ENCODE measurements at regions of chr1 and their contacts with region 1.

Region 1: DNA sequence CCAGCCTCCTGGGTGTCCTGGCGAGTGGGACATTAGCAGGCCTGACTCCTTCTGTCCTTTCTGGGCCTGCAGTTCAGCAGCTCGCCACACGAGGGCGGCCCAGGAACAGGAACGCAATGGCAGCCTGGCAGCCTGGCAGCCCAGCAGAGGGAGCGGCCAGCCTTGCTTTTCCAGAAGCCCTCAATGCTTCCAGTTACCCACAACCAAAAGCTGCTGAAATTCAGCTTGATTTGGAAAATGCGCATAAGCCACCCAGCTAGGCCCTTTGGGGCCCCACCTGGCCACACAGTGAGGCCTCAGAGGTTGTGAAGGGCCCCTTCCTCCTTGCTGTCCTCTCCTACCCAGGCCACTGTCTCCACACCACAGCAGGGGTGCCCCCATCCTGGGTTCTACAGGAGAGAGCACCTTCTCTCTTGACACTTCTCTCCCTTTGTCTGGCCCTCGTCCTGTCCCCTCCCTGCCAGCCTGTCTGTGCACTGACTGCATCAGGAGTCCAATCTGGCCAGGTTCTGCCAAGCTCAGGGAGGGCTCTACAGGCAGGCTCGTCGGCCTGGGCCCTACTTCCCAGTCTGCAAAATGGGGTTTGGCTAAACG is 103.4 kb upstream of the VAMP3 start:
- ATAC-seq: peak; percentile 26 to 92 (median 36)
- H3K4me3 ChIP-seq: no peak overlapping the region
- H3K27ac ChIP-seq: peak overlapping the region; percentile 86 to 98
- H3K4me1 ChIP-seq: peaks cover 36 to 41% of the 10 kb centered on the region in 2 donors

Region 2: GRCh38 chr1:7356079-7356478 is 311.6 kb before region 1 on chr1:
- in situ Hi-C with region 1: no loop called
- ATAC-seq: no peak
- H3K4me3 ChIP-seq: no peak overlapping the region
- H3K27ac ChIP-seq: no peak overlapping the region
- H3K4me1 ChIP-seq: peaks cover 0 to 26% of the 10 kb centered on the region in 2 donors

Region 3: DNA sequence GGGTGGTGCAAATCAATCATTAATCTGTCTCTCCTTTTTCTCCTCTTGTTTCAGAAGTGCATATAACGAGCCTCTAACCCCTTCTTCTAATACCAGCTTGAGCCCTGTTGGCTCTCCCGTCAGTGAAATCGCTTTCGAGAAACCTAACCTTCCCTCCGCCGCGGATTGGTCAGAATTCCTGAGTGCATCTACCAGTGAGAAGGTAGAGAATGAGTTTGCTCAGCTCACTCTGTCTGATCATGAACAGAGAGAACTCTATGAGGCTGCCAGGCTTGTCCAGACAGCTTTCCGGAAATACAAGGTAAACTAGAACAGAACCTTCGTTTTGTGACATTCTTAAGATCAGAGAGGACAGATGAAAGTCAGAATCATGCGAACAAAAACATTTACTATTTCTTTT is 78.1 kb after region 1 on chr1:
- in situ Hi-C with region 1: loop called in 5 of 9 experiments (anchors 5 to 25 kb)
- ATAC-seq: no peak
- H3K4me3 ChIP-seq: no peak overlapping the region
- H3K27ac ChIP-seq: no peak overlapping the region
- H3K4me1 ChIP-seq: no peaks in the 10 kb centered on the region

Region 4: DNA sequence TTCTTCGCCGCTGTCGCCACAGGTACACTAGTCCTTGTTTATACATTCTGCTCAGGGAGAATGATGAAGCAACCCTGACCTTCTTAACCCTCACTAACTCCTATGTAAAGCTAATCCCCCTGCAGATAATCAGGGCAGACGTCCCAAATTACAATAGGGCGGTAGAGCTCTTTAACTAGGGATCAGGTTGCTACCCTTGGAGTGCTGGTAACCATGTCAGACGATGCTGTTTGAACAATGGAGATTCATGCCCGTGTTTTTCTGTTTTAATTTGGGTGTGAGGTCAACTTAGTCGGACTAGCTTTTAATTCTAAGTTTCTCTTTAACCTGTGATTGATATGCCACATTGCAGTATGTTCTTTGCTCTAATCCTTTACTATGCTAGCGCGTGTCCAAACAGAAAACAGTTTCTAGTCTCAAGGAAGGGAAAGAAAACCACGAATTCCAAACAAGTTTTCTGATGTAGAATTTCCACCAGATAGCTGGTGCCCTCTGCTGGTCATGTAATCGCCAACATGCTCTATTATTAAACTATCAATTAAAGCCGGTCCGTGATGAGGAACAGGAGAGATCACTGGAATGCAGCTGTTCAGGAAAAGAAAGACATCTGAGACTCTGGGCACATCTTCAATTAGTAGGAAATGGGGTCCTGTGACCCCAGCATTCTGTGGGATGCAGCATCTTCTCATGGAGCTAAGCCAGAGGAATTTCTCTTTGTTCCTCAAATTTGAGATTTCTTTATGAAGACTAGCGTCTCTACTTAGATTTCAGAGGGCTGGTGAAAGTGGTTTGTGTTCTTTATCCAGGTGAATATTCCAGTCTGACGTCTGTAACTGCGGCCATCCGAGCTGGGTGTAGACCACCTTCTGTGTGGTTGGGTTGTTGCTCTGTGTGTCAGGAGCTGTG is 85.0 kb after region 1 on chr1:
- in situ Hi-C with region 1: loop called in 5 of 9 experiments (anchors 5 to 25 kb)
- ATAC-seq: peak; percentile 57 to 93 (median 68)
- H3K4me3 ChIP-seq: no peak overlapping the region
- H3K27ac ChIP-seq: no peak overlapping the region
- H3K4me1 ChIP-seq: peaks cover 9 to 12% of the 10 kb centered on the region in 2 donors

Region 5: DNA sequence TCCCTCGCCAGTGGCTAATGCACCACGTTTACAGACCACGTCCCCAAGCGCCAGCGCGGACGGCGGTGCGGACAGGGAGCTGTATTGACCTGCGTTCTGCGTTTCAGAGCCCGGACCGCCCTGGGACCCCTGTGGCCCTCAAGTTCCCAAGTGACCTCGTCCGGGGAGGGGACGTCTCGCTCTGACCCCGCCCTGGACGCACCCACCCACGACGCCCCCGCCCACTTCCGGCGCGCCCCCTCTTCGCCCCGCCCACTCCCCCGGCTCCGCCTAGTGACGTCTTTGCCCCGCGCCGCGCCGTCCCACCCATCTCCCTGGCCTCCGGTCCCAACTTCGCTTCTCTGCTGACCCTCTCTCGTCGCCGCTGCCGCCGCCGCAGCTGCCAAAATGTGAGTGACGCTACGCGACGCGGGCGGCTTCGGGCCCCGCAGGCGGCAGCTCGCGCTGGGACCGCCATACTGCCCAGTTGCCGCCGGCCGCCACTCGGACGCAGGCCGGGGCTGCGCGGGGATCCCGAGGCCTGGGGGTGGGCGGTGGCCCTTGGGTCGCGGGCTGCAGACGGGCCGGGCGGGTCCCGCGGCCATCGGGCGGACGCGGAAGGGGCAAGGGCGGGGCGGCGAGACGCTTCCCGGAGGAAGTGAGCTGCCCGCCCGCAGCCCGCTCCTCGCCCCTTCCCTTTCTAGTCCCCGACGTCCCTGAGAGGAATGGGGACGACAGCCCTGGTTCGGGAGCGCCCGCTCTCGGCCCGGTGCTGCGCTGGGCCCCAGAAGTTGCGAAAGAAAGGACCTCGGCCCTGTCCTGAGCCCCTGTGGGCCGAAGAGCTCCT is 103.5 kb after region 1 on chr1 and contains the start of gene VAMP3:
- in situ Hi-C with region 1: loop called in 3 of 9 experiments (anchors 25 kb)
- ATAC-seq: peak; percentile 88 to 92 (median 89)
- H3K4me3 ChIP-seq: peak within 1 kb of the TSS; percentile 89 to 99 (median 98)
- H3K27ac ChIP-seq: peak within 1 kb of the TSS; percentile 58 to 84
- H3K4me1 ChIP-seq: peaks cover 5 to 8% of the 10 kb centered on the region in 2 donors
- total RNA-seq, gene VAMP3: 24.0 to 114 (median 52.2) TPM

Region 6: GRCh38 chr1:7902478-7903085 is 234.9 kb after region 1 on chr1:
- in situ Hi-C with region 1: loop called in 5 of 9 experiments (anchors 25 kb)
- ATAC-seq: peak; percentile 89 to 99 (median 96)
- H3K4me3 ChIP-seq: no peak overlapping the region
- H3K27ac ChIP-seq: no peak overlapping the region
- H3K4me1 ChIP-seq: peaks cover 0 to 2% of the 10 kb centered on the region in 2 donors

Region 7: GRCh38 chr1:8314346-8315280 is 646.9 kb after region 1 on chr1:
- in situ Hi-C with region 1: loop called in 1 of 9 experiments (anchors 25 kb)
- ATAC-seq: peak; percentile 80 to 89 (median 85)
- H3K4me3 ChIP-seq: no peak overlapping the region
- H3K27ac ChIP-seq: no peak overlapping the region
- H3K4me1 ChIP-seq: peaks cover 17 to 20% of the 10 kb centered on the region in 2 donors

Measured in motor neuron (in vitro differentiated cells).